Common myeloid progenitor, CD34-positive (primary cell): ENCODE measurements at regions of chr10 and their contacts with region 1.

Region 1: GRCh38 chr10:49407552-49408137 is 11.8 kb upstream of the DRGX start:
- DNase-seq: peak; percentile 68 to 84 (median 75)
- H3K4me3 ChIP-seq: no peak overlapping the region
- H3K27ac ChIP-seq: no peak overlapping the region
- H3K4me1 ChIP-seq: no peaks in the 10 kb centered on the region
- H3K27me3 ChIP-seq: peaks cover 0 to 31% (median 18%) of the 10 kb centered on the region in 5 experiments

Region 2: DNA sequence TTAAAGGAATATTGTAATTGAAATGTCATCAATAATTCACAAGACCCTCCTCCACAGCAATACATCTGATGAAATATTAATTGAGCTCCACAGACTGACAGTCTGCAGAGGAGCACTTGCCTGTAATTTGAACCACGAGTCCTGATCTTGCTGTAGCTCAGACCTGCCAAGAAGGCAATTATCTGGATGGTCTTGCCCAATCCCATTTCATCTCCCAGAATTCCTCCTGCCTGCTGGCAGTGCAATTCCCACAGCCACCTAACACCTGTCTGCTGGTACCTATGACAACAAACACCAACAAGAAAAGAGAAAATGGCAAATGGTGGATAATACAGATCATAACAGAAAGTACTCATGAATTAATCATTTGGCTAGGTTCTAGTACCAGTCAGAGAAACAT is 92.8 kb after region 1 on chr10:
- CTCF ChIA-PET with region 1: interaction called, 14 read pairs
- POLR2A ChIA-PET with region 1: no interaction called
- DNase-seq: no peak
- H3K4me3 ChIP-seq: no peak overlapping the region
- H3K27ac ChIP-seq: no peak overlapping the region
- H3K4me1 ChIP-seq: no peaks in the 10 kb centered on the region
- H3K27me3 ChIP-seq: no peaks in the 10 kb centered on the region

Region 3: GRCh38 chr10:49512121-49512809 is 104.6 kb after region 1 on chr10:
- CTCF ChIA-PET with region 1: interaction called, 137 read pairs
- POLR2A ChIA-PET with region 1: no interaction called
- DNase-seq: peak; percentile 31 to 69 (median 65)
- H3K4me3 ChIP-seq: no peak overlapping the region
- H3K27ac ChIP-seq: no peak overlapping the region
- H3K4me1 ChIP-seq: peaks cover 0 to 11% (median 5%) of the 10 kb centered on the region in 4 experiments
- H3K27me3 ChIP-seq: no peaks in the 10 kb centered on the region

Region 4: GRCh38 chr10:49518982-49519578 is 111.4 kb after region 1 on chr10:
- CTCF ChIA-PET with region 1: interaction called, 137 read pairs
- POLR2A ChIA-PET with region 1: no interaction called
- DNase-seq: peak; percentile 45 to 65 (median 57)
- H3K4me3 ChIP-seq: no peak overlapping the region
- H3K27ac ChIP-seq: no peak overlapping the region
- H3K4me1 ChIP-seq: no peaks in the 10 kb centered on the region
- H3K27me3 ChIP-seq: no peaks in the 10 kb centered on the region